Dendritic cell treated with granulocyte-macrophage colony-stimulating factor and Interleukin-4, amounts not matched to agents 40 ng/mL and 50 ng/mL, for 4 days (primary cell): ENCODE measurements at regions of chr17 and their contacts with region 1.

Region 1: GRCh38 chr17:64648234-64648633 is 13.9 kb downstream of the SMURF2 start:
- H3K4me3 Mint-ChIP-seq: no peak overlapping the region
- H3K27ac Mint-ChIP-seq: no peak overlapping the region
- H3K4me1 Mint-ChIP-seq: peaks cover 26% of the 10 kb centered on the region
- H3K27me3 Mint-ChIP-seq: no peaks in the 10 kb centered on the region

Region 2: DNA sequence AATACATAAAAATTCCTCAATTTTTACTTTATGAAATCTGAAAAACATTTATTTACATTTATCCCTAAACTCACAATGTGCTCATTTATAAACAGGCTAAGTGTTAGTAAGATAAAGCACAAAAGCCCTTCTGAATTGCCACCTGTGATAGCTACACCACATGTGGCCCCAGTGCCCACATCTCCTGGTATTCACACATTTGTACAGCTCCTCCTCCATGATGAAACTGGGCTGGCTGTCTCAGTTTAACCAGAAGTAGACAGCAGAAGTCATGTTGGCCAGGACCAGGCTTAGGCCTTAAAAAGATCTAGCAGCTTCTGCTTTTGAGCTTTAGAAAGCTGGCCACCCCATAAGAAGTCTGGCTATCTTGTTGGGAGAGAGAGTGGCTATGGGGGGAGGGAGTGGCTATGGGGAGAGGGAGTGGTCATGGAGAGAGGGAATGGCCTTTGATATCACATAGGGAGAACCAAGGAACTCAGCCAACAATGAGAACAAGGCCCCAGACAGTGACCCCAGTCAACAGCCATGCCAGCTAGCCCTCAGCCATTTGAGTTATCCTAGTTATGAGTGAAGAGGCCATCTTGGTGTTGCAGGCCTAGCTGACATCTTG is 94.1 kb before region 1 on chr17:
- intact Hi-C with region 1: loop called (anchors 10 kb)
- H3K4me3 Mint-ChIP-seq: no peak overlapping the region
- H3K27ac Mint-ChIP-seq: peak overlapping the region; percentile 46
- H3K4me1 Mint-ChIP-seq: peaks cover 6% of the 10 kb centered on the region
- H3K27me3 Mint-ChIP-seq: no peaks in the 10 kb centered on the region